ENCODE measurements at regions of chr10 and their contacts with region 1.

Region 1: GRCh38 chr10:32958085-32959005 is at the start of gene ITGB1:
- DNase-seq: peak; percentile 76 to 98
- H3K4me3 ChIP-seq: peak within 1 kb of the TSS; percentile 99
- H3K27ac ChIP-seq: peak within 1 kb of the TSS; percentile 95
- H3K4me1 ChIP-seq: peaks cover 65% of the 10 kb centered on the region
- H3K27me3 ChIP-seq: no peaks in the 10 kb centered on the region
- CTCF ChIP-seq: no peak
- total RNA-seq, gene ITGB1: 307 and 421 TPM in 2 replicates

Region 2: GRCh38 chr10:32357056-32357735 is 601.1 kb before region 1 on chr10:
- CTCF ChIA-PET with region 1: no interaction called
- POLR2A ChIA-PET with region 1: no interaction called
- intact Hi-C with region 1: no loop called
- DNase-seq: no peak
- H3K4me3 ChIP-seq: no peak overlapping the region
- H3K27ac ChIP-seq: no peak overlapping the region
- H3K4me1 ChIP-seq: 0 out of 2 replicates have a peak, but pooled peaks cover 7% of the 10 kb centered on the region
- H3K27me3 ChIP-seq: no peaks in the 10 kb centered on the region
- CTCF ChIP-seq: no peak

Region 3: GRCh38 chr10:32445740-32446535 is 512.4 kb before region 1 on chr10 and contains the start of gene CCDC7:
- CTCF ChIA-PET with region 1: no interaction called
- POLR2A ChIA-PET with region 1: no interaction called
- intact Hi-C with region 1: loop called (anchors 5 kb)
- DNase-seq: peak; percentile 70 to 84
- H3K4me3 ChIP-seq: peak within 1 kb of the TSS; percentile 91
- H3K27ac ChIP-seq: peak within 1 kb of the TSS; percentile 78
- H3K4me1 ChIP-seq: peaks cover 7% of the 10 kb centered on the region; the same call in 1 of the 2 replicates
- H3K27me3 ChIP-seq: no peaks in the 10 kb centered on the region
- CTCF ChIP-seq: peak; percentile 30; the same call in 1 of the 2 replicates
- total RNA-seq, gene CCDC7: 5.2 and 6.9 TPM in 2 replicates

Region 4: GRCh38 chr10:32911285-32912016 is 46.9 kb before region 1 on chr10:
- CTCF ChIA-PET with region 1: no interaction called
- POLR2A ChIA-PET with region 1: no interaction called
- intact Hi-C with region 1: loop called (anchors 5 kb)
- DNase-seq: no peak
- H3K4me3 ChIP-seq: no peak overlapping the region
- H3K27ac ChIP-seq: no peak overlapping the region
- H3K4me1 ChIP-seq: no peaks in the 10 kb centered on the region
- H3K27me3 ChIP-seq: no peaks in the 10 kb centered on the region
- CTCF ChIP-seq: no peak

Region 5: DNA sequence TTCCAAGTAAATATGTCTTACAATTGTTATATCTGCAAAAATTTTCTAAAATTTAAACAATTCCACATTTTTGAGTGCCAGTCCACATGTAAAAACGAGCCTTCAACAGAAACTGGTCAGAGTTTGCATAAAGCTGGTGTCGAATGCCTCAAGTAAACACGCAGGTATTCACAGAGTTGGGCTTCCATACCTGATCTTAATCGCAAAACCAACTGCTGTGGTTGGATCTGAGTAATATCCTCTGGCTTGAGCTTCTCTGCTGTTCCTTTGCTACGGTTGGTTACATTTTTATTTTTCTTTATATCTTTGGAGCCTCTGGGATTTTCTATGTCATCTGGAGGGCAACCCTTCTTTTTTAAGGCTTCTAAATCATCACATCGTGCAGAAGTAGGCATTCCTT is 28.7 kb before region 1 on chr10:
- CTCF ChIA-PET with region 1: no interaction called
- POLR2A ChIA-PET with region 1: interaction called, 13 read pairs
- intact Hi-C with region 1: no loop called
- DNase-seq: peak in 1 of 2 experiments; percentile 12
- H3K4me3 ChIP-seq: no peak overlapping the region
- H3K27ac ChIP-seq: no peak overlapping the region
- H3K4me1 ChIP-seq: no peaks in the 10 kb centered on the region
- H3K27me3 ChIP-seq: no peaks in the 10 kb centered on the region
- CTCF ChIP-seq: no peak

Region 6: GRCh38 chr10:32971536-32972091 is 13.3 kb after region 1 on chr10:
- CTCF ChIA-PET with region 1: no interaction called
- POLR2A ChIA-PET with region 1: interaction called, 10 read pairs
- intact Hi-C with region 1: no loop called
- DNase-seq: peak in 1 of 2 experiments; percentile 87
- H3K4me3 ChIP-seq: no peak overlapping the region
- H3K27ac ChIP-seq: peak overlapping the region; percentile 34
- H3K4me1 ChIP-seq: peaks cover 29% of the 10 kb centered on the region
- H3K27me3 ChIP-seq: no peaks in the 10 kb centered on the region
- CTCF ChIP-seq: no peak

Region 7: GRCh38 chr10:32980558-32981468 is 22.5 kb after region 1 on chr10:
- CTCF ChIA-PET with region 1: no interaction called
- POLR2A ChIA-PET with region 1: interaction called, 25 read pairs
- intact Hi-C with region 1: loop called (anchors 1 kb)
- DNase-seq: peak; percentile 92 to 94
- H3K4me3 ChIP-seq: peak overlapping the region; percentile 60
- H3K27ac ChIP-seq: peak overlapping the region; percentile 98
- H3K4me1 ChIP-seq: peaks cover 58% of the 10 kb centered on the region
- H3K27me3 ChIP-seq: no peaks in the 10 kb centered on the region
- CTCF ChIP-seq: no peak

Region 8: GRCh38 chr10:33087152-33087551 is 128.8 kb after region 1 on chr10:
- CTCF ChIA-PET with region 1: no interaction called
- POLR2A ChIA-PET with region 1: no interaction called
- intact Hi-C with region 1: no loop called
- DNase-seq: no peak
- H3K4me3 ChIP-seq: no peak overlapping the region
- H3K27ac ChIP-seq: no peak overlapping the region
- H3K4me1 ChIP-seq: no peaks in the 10 kb centered on the region
- H3K27me3 ChIP-seq: no peaks in the 10 kb centered on the region
- CTCF ChIP-seq: no peak

Region 9: GRCh38 chr10:34434119-34434594 is 1475.8 kb after region 1 on chr10:
- CTCF ChIA-PET with region 1: interaction called, 16 read pairs
- POLR2A ChIA-PET with region 1: no interaction called
- intact Hi-C with region 1: no loop called
- DNase-seq: no peak
- H3K4me3 ChIP-seq: no peak overlapping the region
- H3K27ac ChIP-seq: no peak overlapping the region
- H3K4me1 ChIP-seq: no peaks in the 10 kb centered on the region
- H3K27me3 ChIP-seq: no peaks in the 10 kb centered on the region
- CTCF ChIP-seq: no peak